OCI-LY7 (cell line): ENCODE measurements at regions of chr6 and their contacts with region 1.

Region 1: GRCh38 chr6:169824021-169824420 is 72.6 kb downstream of the ERMARD start:
- DNase-seq: no peak
- H3K4me3 ChIP-seq: no peak overlapping the region
- H3K27ac ChIP-seq: no peak overlapping the region
- H3K4me1 ChIP-seq: no peaks in the 10 kb centered on the region
- CTCF ChIP-seq: no peak

Region 2: DNA sequence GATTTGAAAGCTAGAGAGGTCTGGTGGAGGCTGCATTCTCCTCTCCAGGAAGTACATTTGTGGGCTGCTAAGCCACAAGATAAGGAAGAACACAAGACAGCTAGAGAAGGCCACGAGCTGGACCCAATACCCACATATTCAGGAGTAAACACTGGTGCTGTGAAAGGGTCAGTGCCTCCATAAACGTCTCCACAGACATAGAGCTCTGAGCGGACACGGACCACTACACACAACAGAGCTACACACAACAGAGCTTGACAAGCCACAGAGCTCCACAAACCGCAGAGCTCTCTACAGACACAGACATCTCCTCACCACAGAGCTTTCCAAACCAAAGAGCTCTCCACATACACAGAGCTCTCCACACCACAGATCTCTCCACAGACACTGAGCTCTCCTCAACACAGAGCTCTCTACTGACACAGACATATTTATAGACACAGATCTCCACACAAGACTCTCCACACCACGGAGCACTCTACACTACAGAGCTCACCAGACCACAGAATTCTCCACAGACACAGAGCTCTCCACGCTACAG is 20.7 kb before region 1 on chr6:
- CTCF ChIA-PET with region 1: no interaction called
- POLR2A ChIA-PET with region 1: interaction called, 22 read pairs
- intact Hi-C with region 1: no loop called
- DNase-seq: peak; percentile 64
- H3K4me3 ChIP-seq: no peak overlapping the region
- H3K27ac ChIP-seq: no peak overlapping the region
- H3K4me1 ChIP-seq: peaks cover 13% of the 10 kb centered on the region
- CTCF ChIP-seq: no peak